OCI-LY7 (cell line): ENCODE measurements at regions of chr5 and their contacts with region 1.

Region 1: DNA sequence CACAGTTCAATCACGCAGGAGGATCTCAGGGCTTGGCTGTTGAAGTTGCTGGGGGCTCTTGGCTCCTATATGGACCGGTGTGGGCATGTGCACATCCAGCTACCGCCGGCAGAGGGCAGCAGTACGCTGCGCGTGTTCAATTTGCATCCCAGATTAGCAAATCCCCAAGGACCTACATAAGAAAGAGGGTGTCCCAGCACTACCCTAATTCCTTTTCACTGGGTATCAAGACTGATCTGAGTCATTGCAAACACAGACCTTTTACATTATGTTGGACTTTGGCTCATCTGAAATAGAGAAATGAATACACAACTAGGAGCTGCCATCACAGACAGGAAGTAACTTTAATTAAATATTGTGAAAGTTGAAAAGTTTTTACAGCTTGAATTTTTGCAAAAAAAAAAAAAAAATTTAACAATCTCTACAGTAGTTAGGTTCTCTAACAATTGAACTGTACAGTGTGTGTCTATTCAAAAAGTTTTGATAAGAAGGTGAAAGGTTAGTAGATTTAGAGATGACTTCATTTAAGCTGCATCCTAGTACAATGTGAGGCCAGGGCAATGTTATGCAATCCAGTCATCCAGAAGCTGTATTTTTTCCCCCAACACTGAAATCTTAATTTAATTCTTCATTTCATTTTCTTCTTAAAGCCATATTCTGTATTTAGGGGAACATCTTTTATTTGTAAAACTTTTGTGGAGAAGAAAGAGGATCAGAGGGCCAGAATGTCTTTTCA is 404.0 kb downstream of the EBF1 start:
- DNase-seq: peak; percentile 90
- H3K4me3 ChIP-seq: no peak overlapping the region
- H3K27ac ChIP-seq: peak overlapping the region; percentile 50
- H3K4me1 ChIP-seq: peaks cover 45% of the 10 kb centered on the region
- CTCF ChIP-seq: peak; percentile 100

Region 2: DNA sequence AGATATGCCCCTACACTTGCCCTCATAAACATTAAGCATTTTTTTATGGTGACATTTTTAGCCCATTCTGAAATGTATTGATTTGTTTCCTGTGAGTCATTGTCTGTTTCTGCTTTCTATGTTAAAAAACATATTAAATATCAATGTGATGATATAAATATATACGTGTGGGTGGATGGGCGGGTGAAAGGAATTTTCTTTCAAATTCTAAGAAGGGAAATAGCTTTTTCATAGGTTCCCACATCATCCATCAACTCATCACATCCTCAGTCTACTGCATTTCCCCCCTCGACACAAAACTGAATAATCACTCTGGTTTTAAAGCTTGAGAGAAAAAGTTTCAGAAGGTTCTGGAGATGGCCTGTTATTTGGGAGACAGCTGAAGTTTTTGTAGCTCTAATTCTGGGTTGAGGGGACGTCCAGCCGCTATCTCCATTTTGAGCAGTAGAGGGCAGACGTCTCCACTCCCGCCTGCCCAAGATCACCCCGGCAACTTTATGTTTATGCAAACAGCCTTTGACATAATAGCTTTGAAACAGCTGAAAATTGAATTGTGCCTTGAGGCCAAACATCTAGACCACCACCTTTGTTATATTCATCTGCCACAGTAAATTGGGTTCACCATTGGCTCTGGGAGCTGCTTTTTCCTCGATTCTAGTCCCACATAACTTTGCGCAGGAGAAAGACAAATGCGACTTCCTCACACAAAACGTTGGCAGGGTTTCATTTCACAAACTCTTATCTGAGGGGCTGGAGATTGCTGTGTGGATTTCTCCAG is 620.6 kb before region 1 on chr5:
- CTCF ChIA-PET with region 1: interaction called, 3 read pairs
- POLR2A ChIA-PET with region 1: no interaction called
- intact Hi-C with region 1: loop called (anchors 5 kb)
- DNase-seq: peak; percentile 69
- H3K4me3 ChIP-seq: no peak overlapping the region
- H3K27ac ChIP-seq: no peak overlapping the region
- H3K4me1 ChIP-seq: peaks cover 4% of the 10 kb centered on the region
- CTCF ChIP-seq: peak; percentile 98

Region 3: GRCh38 chr5:158398360-158399201 is 297.2 kb before region 1 on chr5:
- CTCF ChIA-PET with region 1: no interaction called
- POLR2A ChIA-PET with region 1: no interaction called
- intact Hi-C with region 1: loop called (anchors 1 kb)
- DNase-seq: peak; percentile 99
- H3K4me3 ChIP-seq: peak overlapping the region; percentile 31
- H3K27ac ChIP-seq: peak overlapping the region; percentile 95
- H3K4me1 ChIP-seq: peaks cover 54% of the 10 kb centered on the region
- CTCF ChIP-seq: no peak

Region 4: GRCh38 chr5:158812408-158812807 is 116.6 kb after region 1 on chr5:
- CTCF ChIA-PET with region 1: interaction called, 7 read pairs
- POLR2A ChIA-PET with region 1: interaction called, 10 read pairs
- intact Hi-C with region 1: loop called (anchors 1 kb)
- DNase-seq: peak; percentile 99
- H3K4me3 ChIP-seq: peak overlapping the region; percentile 57
- H3K27ac ChIP-seq: peak overlapping the region; percentile 94
- H3K4me1 ChIP-seq: peaks cover 96% of the 10 kb centered on the region
- CTCF ChIP-seq: no peak

Region 5: GRCh38 chr5:158898185-158899177 is 202.7 kb after region 1 on chr5:
- CTCF ChIA-PET with region 1: no interaction called
- POLR2A ChIA-PET with region 1: no interaction called
- intact Hi-C with region 1: no loop called
- DNase-seq: peak; percentile 29
- H3K4me3 ChIP-seq: no peak overlapping the region
- H3K27ac ChIP-seq: no peak overlapping the region
- H3K4me1 ChIP-seq: peaks cover 16% of the 10 kb centered on the region
- CTCF ChIP-seq: no peak

Region 6: GRCh38 chr5:159010661-159011442 is 315.1 kb after region 1 on chr5:
- CTCF ChIA-PET with region 1: no interaction called
- POLR2A ChIA-PET with region 1: interaction called, 5 read pairs
- intact Hi-C with region 1: loop called (anchors 1 kb)
- DNase-seq: peak; percentile 95
- H3K4me3 ChIP-seq: peak overlapping the region; percentile 73
- H3K27ac ChIP-seq: peak overlapping the region; percentile 100
- H3K4me1 ChIP-seq: peaks cover 80% of the 10 kb centered on the region
- CTCF ChIP-seq: no peak; the same call in 1 of the 2 replicates

Region 7: GRCh38 chr5:159106569-159107282 is 411.0 kb after region 1 on chr5:
- CTCF ChIA-PET with region 1: interaction called, 17 read pairs
- POLR2A ChIA-PET with region 1: interaction called, 6 read pairs
- intact Hi-C with region 1: loop called (anchors 1 kb)
- DNase-seq: peak; percentile 89
- H3K4me3 ChIP-seq: peak overlapping the region; percentile 51
- H3K27ac ChIP-seq: peak overlapping the region; percentile 2
- H3K4me1 ChIP-seq: peaks cover 42% of the 10 kb centered on the region
- CTCF ChIP-seq: peak; percentile 96